Posterior vena cava (tissue), 2 donors: ENCODE measurements at regions of chr1 and their contacts with region 1.

Region 1: DNA sequence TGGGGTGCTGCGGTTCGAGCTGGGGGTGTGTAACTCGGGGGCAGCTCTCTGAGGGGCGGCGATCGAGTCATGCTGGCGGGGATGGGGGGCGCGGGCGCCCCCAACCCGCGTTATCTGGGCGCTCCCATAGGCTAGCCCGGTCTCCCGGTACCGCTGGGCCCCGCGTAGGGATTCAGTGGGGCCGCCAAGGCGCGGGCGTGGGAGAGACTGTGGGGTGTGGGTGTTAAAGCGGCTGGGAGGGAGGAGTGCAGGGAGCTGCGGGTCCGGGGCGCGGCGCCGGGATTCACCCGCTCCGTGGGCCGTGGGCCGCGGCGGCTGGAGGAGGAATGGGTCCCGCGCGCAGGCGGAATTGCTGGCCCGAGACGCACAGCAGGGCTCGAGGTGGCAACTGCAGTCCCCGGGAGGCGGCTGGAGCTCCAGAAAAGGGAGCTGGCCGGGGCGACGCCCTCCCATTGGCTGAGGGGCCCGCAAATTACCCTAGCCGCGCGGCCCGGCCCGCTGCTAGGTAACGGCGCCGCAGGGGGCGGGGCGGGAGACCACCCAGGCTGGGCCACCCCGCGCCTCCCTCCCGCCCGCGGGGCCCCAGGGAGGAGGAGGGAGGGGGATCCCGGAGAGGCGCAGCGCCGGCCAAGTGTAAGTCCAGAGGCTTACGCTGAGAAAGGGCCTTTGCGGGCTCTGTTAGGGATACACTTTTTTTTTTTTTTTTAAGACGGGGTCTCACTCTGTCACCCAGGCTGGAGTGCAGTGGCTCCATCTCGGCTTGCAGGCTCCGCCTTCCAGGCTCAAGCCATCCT is at the start of gene PTCH2:
- DNase-seq: no peak
- total RNA-seq, gene PTCH2: 1.6 to 2.1 TPM

Region 2: DNA sequence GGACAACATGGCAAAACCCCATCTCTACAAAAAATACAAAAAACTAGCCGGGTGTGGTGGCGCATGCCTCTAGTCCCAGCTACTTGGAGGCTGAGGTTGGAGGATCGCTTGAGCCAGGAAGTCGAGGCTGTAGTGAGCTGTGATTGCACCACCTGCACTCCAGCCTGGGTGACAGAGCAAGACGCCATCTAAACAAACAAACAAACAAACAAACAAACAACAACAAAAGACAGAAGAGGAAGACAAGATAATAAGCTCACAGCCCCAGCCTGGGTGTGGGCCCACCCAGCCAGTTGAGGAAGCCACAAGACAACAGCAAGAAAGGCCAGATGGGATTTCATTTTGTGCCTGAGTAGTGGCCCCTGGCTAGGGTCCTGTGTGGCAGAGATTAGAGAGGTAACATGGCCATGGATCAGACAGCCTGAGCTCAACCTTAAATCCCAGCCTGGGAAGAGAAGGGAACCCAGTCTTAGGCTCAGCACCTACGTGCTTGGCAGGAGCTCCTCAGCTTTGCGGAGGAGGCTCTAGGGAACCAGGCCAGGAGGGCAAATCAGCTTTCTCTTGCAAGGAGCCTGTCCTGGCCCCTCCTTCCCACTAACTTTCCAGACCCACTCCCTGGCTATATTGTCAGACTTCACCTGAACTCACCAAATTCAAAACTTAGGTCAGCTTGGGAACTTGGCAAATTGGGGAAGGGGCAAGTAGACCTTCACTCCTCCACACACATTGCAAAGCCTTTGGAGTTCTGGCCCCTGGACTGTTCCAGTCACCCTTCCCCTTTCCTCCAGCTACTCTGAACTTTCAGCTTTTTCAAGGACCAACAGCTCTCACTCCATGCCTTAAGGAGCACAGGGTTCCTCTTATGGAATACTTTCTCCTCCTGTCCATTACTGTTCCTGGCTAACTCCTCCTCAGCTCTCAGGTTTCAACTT is 50.0 kb before region 1 on chr1:
- intact Hi-C with region 1: loop called (anchors 5 to 10 kb)
- DNase-seq: peak; percentile 46

Region 3: DNA sequence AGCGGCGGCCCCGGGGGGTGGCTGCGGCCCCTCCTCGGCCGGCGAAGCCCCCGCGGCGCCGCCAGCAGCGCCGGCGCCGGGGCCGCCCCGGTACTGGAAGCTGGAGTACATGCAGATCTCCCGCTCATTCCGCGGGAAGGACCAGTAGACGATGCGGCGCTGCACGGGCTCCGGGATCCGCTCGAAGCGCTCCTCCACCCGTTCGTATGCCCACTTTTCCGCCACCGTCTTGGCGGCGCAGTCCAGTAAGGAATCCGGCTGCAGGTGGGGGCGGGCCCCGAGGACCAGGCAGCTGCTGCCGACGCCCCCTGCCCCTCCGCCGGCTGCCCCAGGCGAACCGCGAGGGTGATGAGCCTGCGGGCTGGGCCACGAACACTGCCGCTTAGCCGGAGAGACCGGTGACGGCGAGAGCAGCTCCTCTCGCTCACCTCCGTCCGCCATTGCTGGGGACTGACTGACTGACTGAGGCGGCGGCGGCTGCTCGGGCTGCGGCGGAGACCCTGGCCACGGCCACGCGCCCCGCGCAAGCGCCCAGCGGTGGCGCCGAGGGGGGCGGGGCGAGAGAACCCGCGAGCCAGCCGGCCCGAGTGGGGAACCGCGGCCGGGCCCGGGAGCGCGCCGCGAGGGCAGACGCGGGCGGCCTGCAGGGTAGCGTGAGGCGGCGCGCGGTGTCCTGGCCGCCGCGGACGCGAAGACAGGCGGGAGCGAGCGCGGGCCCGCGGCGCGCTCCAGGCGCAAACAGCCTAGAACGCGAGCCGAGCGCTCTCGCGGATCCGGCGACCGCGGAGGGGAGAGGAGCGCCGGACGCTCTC is 363.1 kb after region 1 on chr1 and contains the start of gene ZSWIM5:
- intact Hi-C with region 1: no loop called
- DNase-seq: peak; percentile 82
- total RNA-seq, gene ZSWIM5: 1.9 to 2.4 TPM